ENCODE measurements at regions of chr14 and their contacts with region 1.

Region 1: DNA sequence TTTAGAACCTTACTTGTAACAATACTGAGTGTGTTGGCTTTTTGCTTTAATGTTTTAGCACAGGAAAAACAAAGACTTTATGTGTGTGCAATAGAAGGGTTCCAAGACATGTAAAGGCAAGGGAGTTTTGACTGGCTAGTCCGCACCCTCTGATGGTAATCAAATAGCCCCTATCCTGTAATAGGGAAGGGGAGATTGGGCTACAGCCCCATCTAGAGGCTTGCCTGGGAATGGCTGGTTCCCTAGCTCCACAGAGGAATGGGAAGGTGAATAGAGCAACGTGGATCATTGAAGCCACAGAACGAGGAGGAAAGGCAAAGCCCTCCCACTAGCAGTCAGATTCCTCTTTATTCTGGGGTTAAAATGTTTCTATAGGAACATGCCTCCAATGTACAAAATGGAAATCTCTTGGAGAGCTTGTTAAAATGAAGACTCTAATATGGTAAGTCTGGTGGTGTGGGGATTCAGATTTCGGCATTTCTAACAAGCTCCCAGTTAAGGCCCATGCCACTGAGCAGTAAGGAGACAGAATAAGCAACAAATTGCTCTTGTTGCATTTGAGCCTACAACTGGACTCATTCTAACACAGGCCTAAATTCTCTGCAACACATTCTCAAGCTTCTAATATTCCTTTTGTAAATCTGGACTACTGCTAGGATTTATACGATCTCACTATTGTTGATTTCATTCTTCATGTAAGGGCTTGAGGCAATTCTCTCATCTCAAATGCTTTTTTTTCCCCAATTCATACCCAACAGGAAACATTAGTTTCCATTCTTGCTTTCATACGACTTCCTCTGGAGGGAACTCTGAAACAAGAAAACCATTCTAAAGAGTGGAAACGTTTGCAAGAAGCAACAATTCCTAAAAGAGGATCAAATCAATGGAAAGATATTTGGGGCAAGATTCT is 57.1 kb downstream of the NIN start:
- DNase-seq: no peak
- H3K4me3 ChIP-seq: no peak overlapping the region
- H3K27ac ChIP-seq: peak overlapping the region in 1 of 4 donors; percentile 63
- H3K4me1 ChIP-seq: peaks cover 0 to 29% (median 0%) of the 10 kb centered on the region in 3 donors
- H3K27me3 ChIP-seq: no peaks in the 10 kb centered on the region
- CTCF ChIP-seq: peak; percentile 39 to 81 (median 64)
- POLR2A ChIP-seq: no peak

Region 2: DNA sequence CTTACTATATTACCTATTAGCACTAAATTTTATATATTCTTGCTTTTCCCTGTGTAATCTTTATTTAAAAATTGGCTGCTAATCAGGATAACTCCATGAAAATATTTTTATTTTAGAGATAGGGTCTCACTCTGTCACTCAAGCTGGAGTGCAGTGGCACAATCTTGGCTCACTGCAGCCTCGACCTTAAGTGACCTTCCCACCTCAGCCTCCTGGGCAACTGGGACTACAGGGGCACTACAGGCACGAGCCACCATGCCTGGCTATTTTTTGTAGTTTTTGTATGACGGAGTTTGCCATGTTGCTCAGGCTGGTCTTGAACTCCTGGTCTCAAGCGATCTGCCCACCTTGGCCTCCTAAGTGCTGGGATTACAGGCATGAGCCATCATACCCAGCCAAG is 625.1 kb before region 1 on chr14:
- intact Hi-C with region 1: no loop called
- DNase-seq: no peak
- H3K4me3 ChIP-seq: no peak overlapping the region
- H3K27ac ChIP-seq: no peak overlapping the region
- H3K4me1 ChIP-seq: no peaks in the 10 kb centered on the region
- H3K27me3 ChIP-seq: no peaks in the 10 kb centered on the region
- CTCF ChIP-seq: no peak
- POLR2A ChIP-seq: no peak

Region 3: GRCh38 chr14:50475462-50475861 is 298.4 kb before region 1 on chr14:
- intact Hi-C with region 1: no loop called
- DNase-seq: no peak
- H3K4me3 ChIP-seq: no peak overlapping the region
- H3K27ac ChIP-seq: no peak overlapping the region
- H3K4me1 ChIP-seq: no peaks in the 10 kb centered on the region
- H3K27me3 ChIP-seq: no peaks in the 10 kb centered on the region
- CTCF ChIP-seq: no peak
- POLR2A ChIP-seq: no peak

Region 4: GRCh38 chr14:50542941-50543418 is 230.9 kb before region 1 on chr14:
- intact Hi-C with region 1: loop called (anchors 5 kb)
- DNase-seq: no peak
- H3K4me3 ChIP-seq: no peak overlapping the region
- H3K27ac ChIP-seq: no peak overlapping the region
- H3K4me1 ChIP-seq: peaks cover 0 to 21% (median 0%) of the 10 kb centered on the region in 3 donors
- H3K27me3 ChIP-seq: no peaks in the 10 kb centered on the region
- CTCF ChIP-seq: peak; percentile 30 to 67 (median 50)
- POLR2A ChIP-seq: no peak

Region 5: DNA sequence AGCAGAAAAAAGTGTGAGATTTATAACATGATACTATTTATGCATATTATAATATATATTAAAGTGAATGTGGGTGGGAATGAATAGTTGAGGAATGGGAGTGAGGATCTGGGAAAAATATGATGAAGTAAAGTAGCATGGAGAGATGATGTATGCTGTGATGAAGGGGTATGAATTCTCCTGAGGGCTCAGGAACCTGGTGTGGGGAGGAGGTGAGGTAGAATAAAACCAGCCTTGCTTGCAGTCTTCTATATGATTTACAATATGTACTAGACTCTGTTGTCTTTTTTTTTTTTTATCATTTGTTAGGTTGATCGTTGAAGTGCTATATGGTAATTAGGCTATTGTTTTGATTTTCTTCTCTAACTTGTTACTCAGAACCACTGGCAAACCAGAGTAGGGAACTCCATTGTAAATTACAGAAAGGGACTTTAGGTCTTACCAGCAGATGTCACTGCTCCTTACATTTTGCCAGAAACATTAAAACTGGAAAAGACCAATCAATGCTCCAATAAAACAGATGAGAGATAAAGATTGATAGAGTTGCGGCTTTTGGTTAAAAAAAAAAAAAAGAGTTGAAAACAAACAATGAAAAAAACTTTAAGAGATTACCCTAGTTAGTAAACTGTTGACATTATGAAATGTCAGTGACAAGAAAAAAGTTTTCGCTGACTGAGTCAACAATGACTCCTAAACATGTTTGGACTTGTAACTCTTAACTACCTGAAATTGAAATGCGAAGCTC is 174.0 kb before region 1 on chr14:
- intact Hi-C with region 1: loop called (anchors 5 kb)
- DNase-seq: no peak
- H3K4me3 ChIP-seq: no peak overlapping the region
- H3K27ac ChIP-seq: peak overlapping the region in 1 of 4 donors; percentile 32
- H3K4me1 ChIP-seq: peaks cover 0 to 12% (median 0%) of the 10 kb centered on the region in 3 donors
- H3K27me3 ChIP-seq: no peaks in the 10 kb centered on the region
- CTCF ChIP-seq: peak; percentile 24 to 56 (median 30)
- POLR2A ChIP-seq: no peak

Measured in esophagus squamous epithelium (tissue), 5 donors.